ENCODE measurements at regions of chr13 and their contacts with region 1.

Region 1: DNA sequence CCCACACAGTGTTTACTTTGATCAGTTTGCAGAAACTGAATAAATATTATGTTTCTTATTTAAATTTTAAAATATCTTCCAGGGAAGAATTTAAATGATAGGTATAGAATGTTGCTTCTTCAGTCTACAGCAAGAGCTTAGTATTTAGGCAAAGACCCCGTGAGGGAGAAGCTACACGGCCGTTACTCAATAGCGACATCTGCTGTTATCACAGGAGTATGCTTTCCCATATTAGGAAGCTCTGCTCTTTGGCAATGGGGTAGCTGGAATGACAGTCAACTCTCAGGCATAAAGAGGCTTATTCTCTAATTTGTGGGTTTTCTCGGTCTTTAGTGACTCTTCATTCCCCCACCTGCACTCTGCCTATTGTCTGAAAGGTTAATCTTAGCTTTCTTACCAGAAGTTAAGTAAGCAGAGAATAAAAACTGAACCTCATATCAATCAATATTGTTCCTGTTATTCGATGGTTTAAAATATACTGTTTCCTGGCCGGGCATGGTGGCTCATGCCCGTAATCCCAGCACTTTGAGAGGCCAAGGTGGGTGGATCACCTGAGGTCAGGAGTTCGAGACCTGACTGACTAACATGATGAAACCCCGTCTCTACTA is 13.2 kb upstream of the LHFPL6 start:
- DNase-seq: peak; percentile 44
- ATAC-seq: peak; percentile 92
- H3K4me3 ChIP-seq: no peak overlapping the region
- H3K27ac ChIP-seq: no peak overlapping the region
- H3K4me1 ChIP-seq: no peaks in the 10 kb centered on the region
- H3K27me3 ChIP-seq: no peaks in the 10 kb centered on the region; the same call in 1 of the 2 replicates
- CTCF ChIP-seq: peak; percentile 47 to 85 (median 77); a peak in 5 of 6 replicates
- POLR2A ChIP-seq: no peak
- RAD21 ChIP-seq: peak; percentile 61

Region 2: DNA sequence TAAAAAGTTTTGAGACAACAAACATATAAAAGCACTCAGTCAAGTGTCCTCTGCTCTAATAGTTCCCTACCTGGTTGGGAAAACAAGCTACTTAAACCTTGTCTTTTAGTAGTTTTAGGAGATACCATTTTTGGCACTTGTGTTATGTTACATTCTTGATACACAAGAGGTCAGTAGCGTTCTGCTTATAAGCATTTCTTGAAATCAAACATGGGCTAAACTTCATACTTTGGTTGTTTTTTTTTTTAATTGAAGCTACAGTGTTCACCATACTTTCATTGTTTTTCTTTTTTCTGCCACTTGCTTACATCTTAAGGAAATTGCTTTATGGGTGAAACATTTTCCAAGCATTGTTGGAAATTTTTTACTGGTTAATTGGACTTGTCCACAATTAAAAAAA is 565.0 kb before region 1 on chr13:
- CTCF ChIA-PET with region 1: interaction called, 31 read pairs
- POLR2A ChIA-PET with region 1: no interaction called
- RAD21 ChIA-PET with region 1: interaction called, 4 read pairs
- intact Hi-C with region 1: loop called (anchors 1 kb)
- DNase-seq: peak; percentile 24
- ATAC-seq: peak; percentile 55
- H3K4me3 ChIP-seq: no peak overlapping the region
- H3K27ac ChIP-seq: no peak overlapping the region
- H3K4me1 ChIP-seq: no peaks in the 10 kb centered on the region
- H3K27me3 ChIP-seq: no peaks in the 10 kb centered on the region
- CTCF ChIP-seq: peak; percentile 26 to 61 (median 32); a peak in 4 of 6 replicates
- POLR2A ChIP-seq: no peak
- RAD21 ChIP-seq: peak; percentile 52

Region 3: GRCh38 chr13:39144941-39145533 is 471.2 kb before region 1 on chr13:
- CTCF ChIA-PET with region 1: interaction called, 18 read pairs
- POLR2A ChIA-PET with region 1: no interaction called
- RAD21 ChIA-PET with region 1: no interaction called
- intact Hi-C with region 1: loop called (anchors 1 kb)
- DNase-seq: peak; percentile 41
- ATAC-seq: peak; percentile 72
- H3K4me3 ChIP-seq: no peak overlapping the region
- H3K27ac ChIP-seq: no peak overlapping the region
- H3K4me1 ChIP-seq: no peaks in the 10 kb centered on the region
- H3K27me3 ChIP-seq: peaks cover 31% of the 10 kb centered on the region
- CTCF ChIP-seq: peak; percentile 24 to 73 (median 70); a peak in 5 of 6 replicates
- POLR2A ChIP-seq: no peak
- RAD21 ChIP-seq: peak; percentile 52

Region 4: DNA sequence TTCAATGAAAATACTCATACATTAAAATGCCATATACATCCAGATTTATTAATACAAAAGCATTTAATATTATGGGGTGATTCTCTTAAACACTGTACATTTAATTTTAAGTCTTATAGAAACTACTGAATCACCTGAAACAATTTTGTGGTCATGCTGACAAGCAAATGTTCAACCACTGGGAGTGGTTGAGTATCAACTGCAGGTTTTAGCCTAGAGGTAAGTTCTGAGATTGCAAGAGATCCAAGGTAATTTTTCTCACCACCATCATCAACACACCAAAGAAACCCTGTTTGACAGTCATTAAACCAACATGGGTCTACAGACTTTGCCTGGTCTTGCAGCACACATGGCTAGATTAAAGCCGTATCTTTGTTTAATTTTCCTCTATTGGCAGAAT is 209.5 kb before region 1 on chr13:
- CTCF ChIA-PET with region 1: interaction called, 5 read pairs
- POLR2A ChIA-PET with region 1: no interaction called
- RAD21 ChIA-PET with region 1: no interaction called
- intact Hi-C with region 1: loop called (anchors 5 kb)
- DNase-seq: no peak
- ATAC-seq: peak; percentile 50; the same call in 1 of the 2 replicates
- H3K4me3 ChIP-seq: no peak overlapping the region
- H3K27ac ChIP-seq: no peak overlapping the region
- H3K4me1 ChIP-seq: no peaks in the 10 kb centered on the region
- H3K27me3 ChIP-seq: peaks cover 33% of the 10 kb centered on the region
- CTCF ChIP-seq: peak in 2 of 3 experiments; percentile 11 to 19; a peak in 1 of 6 replicates
- POLR2A ChIP-seq: no peak
- RAD21 ChIP-seq: no peak

Region 5: GRCh38 chr13:39415008-39415802 is 201.0 kb before region 1 on chr13:
- CTCF ChIA-PET with region 1: interaction called, 19 read pairs
- POLR2A ChIA-PET with region 1: no interaction called
- RAD21 ChIA-PET with region 1: no interaction called
- intact Hi-C with region 1: loop called (anchors 5 kb)
- DNase-seq: peak; percentile 15
- ATAC-seq: peak; percentile 50; the same call in 1 of the 2 replicates
- H3K4me3 ChIP-seq: no peak overlapping the region
- H3K27ac ChIP-seq: no peak overlapping the region
- H3K4me1 ChIP-seq: no peaks in the 10 kb centered on the region
- H3K27me3 ChIP-seq: peaks cover 73% of the 10 kb centered on the region
- CTCF ChIP-seq: peak; percentile 19 to 55 (median 46); a peak in 4 of 6 replicates
- POLR2A ChIP-seq: no peak
- RAD21 ChIP-seq: peak; percentile 40

Region 6: GRCh38 chr13:39603424-39603947 is 12.7 kb before region 1 on chr13:
- CTCF ChIA-PET with region 1: interaction called, 21 read pairs
- POLR2A ChIA-PET with region 1: no interaction called
- RAD21 ChIA-PET with region 1: no interaction called
- intact Hi-C with region 1: no loop called
- DNase-seq: no peak
- ATAC-seq: no peak; the same call in 1 of the 2 replicates
- H3K4me3 ChIP-seq: peak overlapping the region; percentile 40 to 52; a peak in 3 of 4 replicates
- H3K27ac ChIP-seq: no peak overlapping the region
- H3K4me1 ChIP-seq: peaks cover 0 to 3% of the 10 kb centered on the region in 2 experiments; a peak in 1 of 4 replicates
- H3K27me3 ChIP-seq: peaks cover 37% of the 10 kb centered on the region
- CTCF ChIP-seq: no peak
- POLR2A ChIP-seq: no peak
- RAD21 ChIP-seq: no peak

Measured in HCT116 (cell line).